ENCODE measurements at regions of chr12 and their contacts with region 1.

Region 1: DNA sequence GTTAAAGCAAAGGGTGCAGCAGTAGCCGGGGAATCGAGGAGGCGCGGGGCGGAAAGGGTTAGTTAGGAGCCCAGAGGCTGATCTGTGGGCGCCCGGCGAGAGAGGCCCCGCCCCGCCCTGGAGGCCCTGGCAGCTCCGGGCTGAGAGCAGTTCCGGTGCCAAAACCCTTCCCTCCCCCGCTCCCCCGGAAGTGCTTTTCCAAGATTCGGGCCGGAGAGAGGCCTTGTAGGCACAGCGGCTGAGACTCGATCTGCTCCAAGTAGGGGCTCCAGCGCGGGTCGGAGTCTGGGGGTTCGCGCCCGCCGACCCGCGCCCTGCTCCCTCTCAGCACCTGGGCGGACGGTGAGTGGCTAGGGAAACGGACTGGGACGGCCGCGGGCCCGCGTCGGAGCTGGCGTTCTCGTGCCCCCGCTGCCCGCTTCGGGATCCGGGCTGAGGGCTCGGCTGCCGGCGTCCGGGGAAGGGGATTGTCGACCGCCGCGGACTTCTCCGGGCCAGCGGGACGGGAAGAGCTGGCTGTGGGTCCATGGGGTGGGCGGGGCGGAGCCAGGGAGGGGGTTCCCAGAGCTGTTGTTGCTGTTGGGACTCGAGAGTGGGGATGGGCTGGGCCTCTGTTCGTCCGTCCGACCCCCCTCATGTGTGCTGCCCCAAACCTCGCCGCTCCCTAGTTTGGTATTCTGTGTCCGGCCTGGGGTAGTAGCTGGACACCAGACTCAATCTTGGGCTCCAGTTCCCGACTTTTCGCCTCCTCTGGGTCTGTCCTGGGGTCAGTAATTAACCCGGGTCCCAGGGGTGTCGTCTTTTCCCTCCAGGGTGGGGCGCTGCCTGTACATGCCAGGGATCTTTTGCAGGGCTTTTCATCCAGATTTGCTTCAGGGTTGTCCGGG is at the start of gene FRS2:
- DNase-seq: peak; percentile 86
- ATAC-seq: peak; percentile 98
- H3K4me3 ChIP-seq: peak within 1 kb of the TSS; percentile 89 to 98 (median 96)
- H3K27ac ChIP-seq: peak within 1 kb of the TSS; percentile 95
- H3K4me1 ChIP-seq: peaks cover 63% of the 10 kb centered on the region
- H3K27me3 ChIP-seq: no peaks in the 10 kb centered on the region; a peak in 1 of 5 replicates
- CTCF ChIP-seq: peak; percentile 77
- EP300 ChIP-seq: 0 out of 4 replicates have a peak, but pooled peaks of 1 of the 2 experiments have one; percentile 16
- POLR2A ChIP-seq: peak; percentile 82 to 83
- RAD21 ChIP-seq: peak; percentile 64
- total RNA-seq, gene FRS2: 16.8 and 31.4 TPM in 2 replicates

Region 2: DNA sequence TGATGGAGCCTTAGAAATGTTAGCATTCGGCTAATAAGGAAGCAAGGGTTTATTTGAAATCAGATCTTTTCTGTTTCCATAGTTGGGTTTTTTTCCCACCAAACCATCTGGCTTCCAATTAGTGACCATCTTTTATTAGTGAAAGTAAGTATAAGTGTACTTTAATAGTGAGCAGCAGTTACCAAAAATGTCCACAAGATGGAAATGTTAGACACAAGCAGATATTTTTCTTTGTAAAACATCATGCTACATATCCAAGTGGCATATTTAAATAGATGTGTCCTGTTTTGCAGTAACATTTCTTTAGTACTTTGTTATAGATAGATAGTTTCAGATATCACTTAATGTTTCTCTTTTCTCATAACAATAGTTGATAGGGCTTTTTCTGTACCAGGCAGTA is 82.1 kb before region 1 on chr12:
- CTCF ChIA-PET with region 1: no interaction called
- POLR2A ChIA-PET with region 1: no interaction called
- in situ Hi-C with region 1: no loop called
- intact Hi-C with region 1: loop called (anchors 1 kb)
- DNase-seq: peak; percentile 43
- ATAC-seq: peak; percentile 48; the same call in 2 of the 3 replicates
- H3K4me3 ChIP-seq: no peak overlapping the region
- H3K27ac ChIP-seq: no peak overlapping the region
- H3K4me1 ChIP-seq: no peaks in the 10 kb centered on the region
- H3K27me3 ChIP-seq: no peaks in the 10 kb centered on the region
- CTCF ChIP-seq: peak; percentile 58
- EP300 ChIP-seq: no peak
- POLR2A ChIP-seq: no peak
- RAD21 ChIP-seq: 0 out of 2 replicates have a peak, but pooled peaks have one; percentile 27

Region 3: DNA sequence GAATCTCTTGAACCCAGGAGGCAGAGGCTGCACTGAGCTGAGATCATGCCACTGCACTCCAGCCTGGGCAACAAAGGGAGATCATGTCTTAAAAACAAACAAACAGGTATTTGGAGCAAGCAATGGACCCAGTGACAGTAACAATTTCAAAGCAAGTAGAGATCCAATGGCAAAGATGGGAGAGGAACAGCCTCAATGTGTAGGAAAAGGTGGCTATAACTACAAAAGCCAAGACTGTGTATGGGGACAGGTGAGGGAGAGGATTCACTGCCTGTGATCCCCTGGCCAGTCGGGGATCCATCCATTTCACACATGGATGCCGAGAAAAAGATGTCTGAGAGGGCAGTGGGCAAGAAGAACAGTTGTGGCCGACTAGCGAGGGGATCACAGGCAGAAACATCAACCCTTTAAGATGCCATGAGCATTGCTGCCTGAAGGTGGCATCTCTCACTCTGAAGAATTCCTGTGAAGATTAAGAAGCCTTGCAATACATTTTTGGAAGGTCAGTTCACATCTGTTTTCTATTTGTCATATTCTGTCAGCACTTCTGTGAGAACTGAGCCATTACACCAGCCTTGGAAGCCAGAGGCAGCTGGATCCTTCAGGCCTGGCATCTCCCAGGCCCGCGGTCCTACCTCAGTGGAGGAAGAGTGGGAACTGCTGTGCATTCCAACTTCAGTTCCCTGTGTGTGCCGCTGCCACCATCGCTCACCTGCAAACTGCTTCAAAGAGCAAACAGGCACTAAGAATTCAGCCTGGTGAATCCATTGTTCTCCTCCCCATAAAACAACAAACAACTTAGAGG is 54.8 kb before region 1 on chr12:
- CTCF ChIA-PET with region 1: no interaction called
- POLR2A ChIA-PET with region 1: interaction called, 3 read pairs
- in situ Hi-C with region 1: no loop called
- intact Hi-C with region 1: loop called (anchors 1 kb)
- DNase-seq: peak; percentile 68
- ATAC-seq: peak; percentile 81
- H3K4me3 ChIP-seq: peak overlapping the region; percentile 43 to 69 (median 48)
- H3K27ac ChIP-seq: peak overlapping the region; percentile 67
- H3K4me1 ChIP-seq: peaks cover 60% of the 10 kb centered on the region
- H3K27me3 ChIP-seq: no peaks in the 10 kb centered on the region
- CTCF ChIP-seq: peak; percentile 73
- EP300 ChIP-seq: no peak
- POLR2A ChIP-seq: 0 out of 4 replicates have a peak, but pooled peaks of 1 of the 2 experiments have one; percentile 10
- RAD21 ChIP-seq: peak; percentile 63

Region 4: DNA sequence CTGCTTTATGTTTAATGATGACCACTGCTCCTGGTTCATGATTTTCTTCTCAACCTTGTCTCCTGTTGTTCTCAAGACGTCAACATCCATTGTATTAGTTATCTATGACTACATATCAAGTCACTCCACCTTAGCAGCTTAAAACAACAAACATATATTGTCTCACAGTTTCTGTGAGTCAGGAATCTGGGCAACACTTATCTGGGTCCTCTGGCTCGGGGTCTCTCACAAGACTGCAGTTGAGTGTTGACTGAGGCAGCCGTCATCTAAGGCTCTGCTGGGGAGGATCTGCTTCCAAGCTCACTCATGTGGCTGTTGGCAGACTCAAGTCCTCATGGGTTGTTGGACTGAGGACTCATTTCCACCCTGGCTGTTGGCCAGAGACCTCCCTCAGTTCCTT is 27.5 kb before region 1 on chr12:
- CTCF ChIA-PET with region 1: no interaction called
- POLR2A ChIA-PET with region 1: no interaction called
- in situ Hi-C with region 1: no loop called
- intact Hi-C with region 1: no loop called
- DNase-seq: no peak
- ATAC-seq: no peak
- H3K4me3 ChIP-seq: no peak overlapping the region
- H3K27ac ChIP-seq: no peak overlapping the region
- H3K4me1 ChIP-seq: peaks cover 5% of the 10 kb centered on the region; the same call in 1 of the 2 replicates
- H3K27me3 ChIP-seq: no peaks in the 10 kb centered on the region
- CTCF ChIP-seq: no peak
- EP300 ChIP-seq: no peak
- POLR2A ChIP-seq: no peak
- RAD21 ChIP-seq: no peak

Region 5: DNA sequence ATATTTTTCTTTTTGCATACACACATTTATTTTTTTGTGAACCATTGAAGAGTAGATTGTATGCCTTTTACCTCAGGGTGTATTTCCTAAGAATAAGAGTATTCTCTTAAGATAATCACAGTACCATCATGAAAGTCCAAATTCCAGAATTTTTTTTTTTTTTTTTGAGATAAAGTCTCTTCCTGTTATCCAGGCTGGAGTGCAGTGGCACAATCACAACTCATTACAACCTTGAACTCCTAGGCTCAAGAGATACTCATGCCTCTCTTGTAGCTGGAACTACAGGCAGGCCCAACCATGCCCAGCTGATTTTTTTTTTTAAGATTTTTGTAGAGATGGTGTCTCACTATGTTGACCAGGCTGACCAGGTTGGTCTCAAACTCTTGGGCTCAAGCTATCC is 10.7 kb after region 1 on chr12:
- CTCF ChIA-PET with region 1: no interaction called
- POLR2A ChIA-PET with region 1: interaction called, 10 read pairs
- in situ Hi-C with region 1: no loop called
- intact Hi-C with region 1: no loop called
- DNase-seq: peak; percentile 64
- ATAC-seq: peak; percentile 80
- H3K4me3 ChIP-seq: no peak overlapping the region
- H3K27ac ChIP-seq: no peak overlapping the region
- H3K4me1 ChIP-seq: peaks cover 50% of the 10 kb centered on the region
- H3K27me3 ChIP-seq: no peaks in the 10 kb centered on the region
- CTCF ChIP-seq: no peak
- EP300 ChIP-seq: no peak
- POLR2A ChIP-seq: no peak
- RAD21 ChIP-seq: no peak

Region 6: GRCh38 chr12:69534389-69534822 is 64.0 kb after region 1 on chr12:
- CTCF ChIA-PET with region 1: no interaction called
- POLR2A ChIA-PET with region 1: no interaction called
- in situ Hi-C with region 1: no loop called
- intact Hi-C with region 1: no loop called
- DNase-seq: peak; percentile 6
- ATAC-seq: no peak
- H3K4me3 ChIP-seq: no peak overlapping the region
- H3K27ac ChIP-seq: no peak overlapping the region
- H3K4me1 ChIP-seq: no peaks in the 10 kb centered on the region
- H3K27me3 ChIP-seq: no peaks in the 10 kb centered on the region
- CTCF ChIP-seq: no peak
- EP300 ChIP-seq: no peak
- POLR2A ChIP-seq: no peak
- RAD21 ChIP-seq: no peak

Measured in HepG2 (cell line).